Vagina (tissue), 2 donors: ENCODE measurements at regions of chr17 and their contacts with region 1.

Region 1: DNA sequence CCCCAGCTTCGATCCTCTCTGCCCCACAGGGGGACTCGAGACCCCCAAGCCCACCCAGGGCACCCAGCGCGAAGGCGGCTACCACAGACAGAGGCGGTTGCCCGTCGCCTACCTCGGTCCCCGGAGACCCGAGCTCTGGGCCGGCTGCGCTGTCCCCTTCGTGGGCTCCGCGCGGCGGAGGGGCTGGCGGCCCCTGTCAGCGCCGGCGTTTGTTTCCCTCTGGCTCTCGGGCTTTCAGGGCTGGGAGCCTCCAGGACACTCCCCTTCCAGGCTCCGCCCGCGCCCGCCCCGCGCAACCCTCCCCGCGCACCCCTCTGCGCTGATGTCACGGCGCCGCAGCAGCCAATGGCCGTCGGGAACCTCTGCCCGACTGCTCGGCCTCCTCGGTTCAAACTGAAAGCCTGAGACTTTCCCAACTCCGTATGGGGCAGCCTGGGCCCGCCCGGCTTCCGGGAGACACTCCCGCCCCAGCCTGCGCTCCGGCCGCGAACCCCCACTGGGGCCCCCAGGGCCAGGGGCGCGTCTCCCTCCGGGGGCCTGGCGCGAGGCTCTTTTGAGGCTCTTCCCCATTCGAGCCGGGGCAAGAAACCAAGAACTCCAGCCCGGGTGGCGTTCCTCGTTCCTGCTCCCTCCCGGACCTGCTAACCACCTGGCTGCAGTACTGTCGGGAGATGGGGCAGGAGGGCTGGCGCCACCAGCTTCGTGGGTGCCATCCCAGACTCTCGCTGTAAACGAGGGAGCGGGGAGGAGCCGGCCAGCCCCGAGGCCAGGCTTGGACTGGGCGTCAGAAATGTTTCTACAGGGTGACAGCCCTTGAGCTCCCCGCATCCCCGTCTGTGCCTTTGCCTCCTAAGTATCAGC is at the start of gene CDC42EP4:
- DNase-seq: peak in 1 of 2 donors; percentile 97
- H3K4me3 ChIP-seq: peak within 1 kb of the TSS; percentile 98 to 99
- H3K27ac ChIP-seq: peak within 1 kb of the TSS; percentile 100
- H3K4me1 ChIP-seq: peaks cover 44% of the 10 kb centered on the region
- H3K27me3 ChIP-seq: no peaks in the 10 kb centered on the region
- CTCF ChIP-seq: no peak
- POLR2A ChIP-seq: peak in 1 of 2 donors; percentile 98
- total RNA-seq, gene CDC42EP4: 73.7 TPM

Region 2: GRCh38 chr17:73278465-73279453 is 33.3 kb before region 1 on chr17:
- intact Hi-C with region 1: no loop called
- DNase-seq: no peak
- H3K4me3 ChIP-seq: no peak overlapping the region
- H3K27ac ChIP-seq: peak overlapping the region; percentile 61
- H3K4me1 ChIP-seq: peaks cover 48% of the 10 kb centered on the region
- H3K27me3 ChIP-seq: no peaks in the 10 kb centered on the region
- CTCF ChIP-seq: no peak
- POLR2A ChIP-seq: no peak

Region 3: DNA sequence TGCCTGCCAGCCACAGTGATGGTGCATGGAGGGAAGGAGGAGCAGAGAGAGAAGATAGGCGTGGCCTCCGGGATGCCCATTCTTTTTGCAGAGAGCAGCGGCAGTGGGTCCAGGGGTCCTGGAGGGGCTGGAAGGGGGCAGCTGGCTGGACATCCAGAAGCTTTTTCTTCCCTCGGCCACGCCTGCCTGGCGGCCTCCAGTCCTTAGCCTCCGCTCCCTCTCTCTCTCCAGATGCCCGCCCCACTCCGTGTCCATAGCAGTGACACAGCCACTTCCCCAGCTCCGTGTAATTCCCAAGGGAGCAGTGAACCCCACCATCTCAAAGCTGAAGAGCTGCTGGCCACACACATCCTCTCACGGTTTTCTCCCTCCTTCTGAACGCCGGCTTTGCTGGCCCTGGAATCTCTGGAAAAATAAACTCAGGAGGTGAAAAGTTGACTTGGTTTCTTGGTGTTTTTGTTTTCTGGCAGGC is 26.1 kb after region 1 on chr17:
- intact Hi-C with region 1: loop called (anchors 2 kb)
- DNase-seq: no peak
- H3K4me3 ChIP-seq: peak overlapping the region; percentile 2 to 17
- H3K27ac ChIP-seq: peak overlapping the region; percentile 95
- H3K4me1 ChIP-seq: peaks cover 76% of the 10 kb centered on the region
- H3K27me3 ChIP-seq: no peaks in the 10 kb centered on the region
- CTCF ChIP-seq: no peak
- POLR2A ChIP-seq: no peak